ENCODE measurements at regions of chr1 and their contacts with region 1.

Region 1: GRCh38 chr1:54070171-54070837 is 16.9 kb downstream of the TCEANC2 start:
- DNase-seq: no peak
- ATAC-seq: peak; percentile 75
- H3K4me3 Mint-ChIP-seq: no peak overlapping the region
- H3K27ac Mint-ChIP-seq: no peak overlapping the region
- H3K4me1 Mint-ChIP-seq: no peaks in the 10 kb centered on the region
- H3K27me3 Mint-ChIP-seq: no peaks in the 10 kb centered on the region

Region 2: DNA sequence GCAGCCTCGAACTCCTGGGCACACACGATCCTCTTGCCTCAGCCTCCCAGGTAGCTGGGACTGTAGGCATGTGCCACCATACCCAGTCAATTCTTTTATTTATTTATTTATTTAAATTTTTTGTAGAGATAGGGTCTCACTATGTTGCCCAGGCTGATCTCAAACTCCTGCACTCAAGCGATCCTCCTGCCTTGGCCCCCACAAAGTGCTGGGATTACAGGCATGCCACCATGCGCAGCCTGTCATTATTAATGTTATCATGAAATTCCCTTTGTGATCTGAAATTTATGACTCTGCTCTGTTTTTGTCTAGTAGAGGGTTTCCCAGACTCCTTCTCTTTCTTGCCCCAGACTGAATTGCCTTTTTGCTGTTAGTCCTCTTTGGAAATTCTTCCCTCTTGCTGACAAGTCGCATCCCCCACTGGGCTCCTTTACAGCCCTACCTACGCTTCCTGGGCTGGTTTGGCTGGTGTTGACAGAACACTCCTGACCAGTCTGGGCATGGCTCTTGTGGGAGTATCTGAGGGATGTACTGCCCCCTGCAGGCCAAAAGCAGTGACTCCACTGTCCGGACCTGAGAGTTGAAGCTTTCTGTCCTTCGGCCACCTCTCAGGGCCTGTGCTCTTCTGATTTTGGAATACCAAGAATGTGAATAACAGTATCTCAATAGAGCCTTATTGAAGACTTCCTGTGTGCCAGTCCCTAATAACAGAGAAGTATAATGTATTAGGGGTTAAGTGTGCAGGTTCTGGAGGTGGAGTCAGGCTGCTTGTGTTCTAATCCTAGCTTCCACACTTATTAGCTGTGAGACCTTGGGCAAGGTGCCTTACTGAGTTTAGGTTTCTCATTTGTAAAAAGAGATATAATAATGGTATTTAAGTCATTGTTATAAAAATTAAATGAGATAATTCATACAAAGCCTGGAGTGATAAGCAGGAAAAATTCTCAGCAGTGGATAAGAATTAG is 11.3 kb after region 1 on chr1:
- CTCF ChIA-PET with region 1: interaction called, 10 read pairs
- DNase-seq: peak; percentile 73
- ATAC-seq: peak; percentile 95
- H3K4me3 Mint-ChIP-seq: no peak overlapping the region
- H3K27ac Mint-ChIP-seq: no peak overlapping the region
- H3K4me1 Mint-ChIP-seq: peaks cover 4% of the 10 kb centered on the region
- H3K27me3 Mint-ChIP-seq: no peaks in the 10 kb centered on the region

Region 3: GRCh38 chr1:54095546-54096226 is 25.4 kb after region 1 on chr1:
- CTCF ChIA-PET with region 1: no interaction called
- DNase-seq: no peak
- ATAC-seq: no peak
- H3K4me3 Mint-ChIP-seq: no peak overlapping the region
- H3K27ac Mint-ChIP-seq: no peak overlapping the region
- H3K4me1 Mint-ChIP-seq: no peaks in the 10 kb centered on the region
- H3K27me3 Mint-ChIP-seq: no peaks in the 10 kb centered on the region